Activated CD8-positive, alpha-beta memory T cell treated with anti-CD3 and anti-CD28 coated beads, Interleukin-2, amount 10 ng/mL, durations not matched to agents 7 days and 5 days (primary cell): ENCODE measurements at regions of chr9 and their contacts with region 1.

Region 1: GRCh38 chr9:4117835-4118610 is 181.8 kb downstream of the GLIS3 start:
- DNase-seq: peak; percentile 65
- ATAC-seq: peak; percentile 58
- H3K4me3 Mint-ChIP-seq: no peak overlapping the region
- H3K27ac Mint-ChIP-seq: no peak overlapping the region
- H3K4me1 Mint-ChIP-seq: no peaks in the 10 kb centered on the region
- H3K27me3 Mint-ChIP-seq: peaks cover 6% of the 10 kb centered on the region

Region 2: GRCh38 chr9:3732077-3733038 is 385.7 kb before region 1 on chr9:
- CTCF ChIA-PET with region 1: interaction called, 18 read pairs
- DNase-seq: peak; percentile 57
- ATAC-seq: peak; percentile 97
- H3K4me3 Mint-ChIP-seq: peak overlapping the region; percentile 40
- H3K27ac Mint-ChIP-seq: peak overlapping the region; percentile 6
- H3K4me1 Mint-ChIP-seq: peaks cover 26% of the 10 kb centered on the region
- H3K27me3 Mint-ChIP-seq: no peaks in the 10 kb centered on the region

Region 3: GRCh38 chr9:3968891-3969290 is 149.1 kb before region 1 on chr9:
- CTCF ChIA-PET with region 1: no interaction called
- DNase-seq: no peak
- ATAC-seq: no peak
- H3K4me3 Mint-ChIP-seq: no peak overlapping the region
- H3K27ac Mint-ChIP-seq: no peak overlapping the region
- H3K4me1 Mint-ChIP-seq: no peaks in the 10 kb centered on the region
- H3K27me3 Mint-ChIP-seq: peaks cover 8% of the 10 kb centered on the region

Region 4: DNA sequence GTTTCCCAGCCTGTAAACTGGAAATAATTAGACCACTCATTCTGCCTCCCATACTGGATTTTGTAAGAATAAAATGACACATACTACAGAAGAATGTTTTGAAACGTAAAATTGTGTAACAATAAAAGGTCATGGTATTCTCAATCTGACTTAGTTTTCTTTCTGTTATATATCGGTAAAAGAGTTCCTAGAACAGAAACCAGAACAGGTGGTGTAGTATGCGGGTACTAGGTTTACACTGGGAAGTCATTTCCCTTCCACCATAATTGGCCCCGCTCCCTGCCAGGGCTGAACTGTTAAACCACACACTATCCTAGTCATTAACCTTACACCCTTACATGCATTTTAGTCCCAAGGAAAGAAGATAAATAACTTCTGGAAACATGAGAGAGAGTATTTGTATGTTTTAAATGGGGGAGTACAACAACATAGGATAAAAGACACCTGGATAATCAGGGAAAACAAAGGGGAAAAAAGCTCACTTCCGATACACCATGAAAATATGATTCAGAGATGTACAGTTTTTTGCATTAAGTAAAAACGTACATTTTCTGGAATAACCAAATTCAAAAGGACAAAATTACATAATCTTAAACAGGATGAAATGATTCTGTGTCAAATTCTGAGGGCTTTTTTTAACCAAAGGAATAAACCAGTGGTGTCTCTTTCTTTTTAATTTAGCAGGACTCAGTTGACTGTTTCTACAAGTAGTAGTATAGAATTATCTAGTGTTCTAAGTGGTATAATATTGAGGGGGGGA is 17.9 kb before region 1 on chr9:
- CTCF ChIA-PET with region 1: no interaction called
- DNase-seq: no peak
- ATAC-seq: no peak
- H3K4me3 Mint-ChIP-seq: no peak overlapping the region
- H3K27ac Mint-ChIP-seq: no peak overlapping the region
- H3K4me1 Mint-ChIP-seq: peaks cover 8% of the 10 kb centered on the region
- H3K27me3 Mint-ChIP-seq: peaks cover 33% of the 10 kb centered on the region

Region 5: GRCh38 chr9:4152876-4153275 is 34.9 kb after region 1 on chr9:
- CTCF ChIA-PET with region 1: no interaction called
- DNase-seq: no peak
- ATAC-seq: no peak
- H3K4me3 Mint-ChIP-seq: no peak overlapping the region
- H3K27ac Mint-ChIP-seq: no peak overlapping the region
- H3K4me1 Mint-ChIP-seq: no peaks in the 10 kb centered on the region
- H3K27me3 Mint-ChIP-seq: peaks cover 17% of the 10 kb centered on the region

Region 6: DNA sequence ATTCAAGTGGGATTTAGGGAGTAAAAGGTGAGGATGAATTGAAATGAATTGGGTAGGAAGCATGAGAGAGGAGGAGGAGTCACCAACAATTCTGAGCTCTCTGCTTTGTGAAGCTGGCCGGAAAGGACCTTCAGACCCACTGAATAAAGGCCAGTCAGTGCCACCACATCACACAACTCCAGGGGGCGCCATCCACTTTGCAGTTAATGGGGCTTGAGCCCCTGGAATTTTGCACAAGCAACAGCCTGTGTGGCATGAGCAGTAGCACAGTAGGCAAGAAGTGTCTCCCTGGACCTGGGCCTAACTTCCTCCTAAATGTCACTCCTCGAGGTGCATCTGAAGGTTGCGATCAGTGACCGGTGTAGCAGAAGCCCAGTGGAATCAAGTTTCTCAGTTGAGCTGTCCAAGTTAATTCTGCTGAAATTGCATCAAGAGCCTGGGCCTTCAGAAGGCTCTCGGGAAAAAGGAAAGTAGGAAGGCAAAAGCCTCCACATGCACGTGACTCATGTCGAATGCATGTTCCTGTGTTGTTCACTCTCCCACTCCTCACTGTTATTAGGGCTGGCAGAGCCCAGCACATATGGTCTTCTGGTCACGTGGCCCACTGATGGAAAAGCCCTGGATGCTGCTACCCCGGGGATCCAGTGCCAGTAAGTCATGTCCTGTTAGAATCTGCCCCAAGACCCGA is 209.6 kb after region 1 on chr9:
- CTCF ChIA-PET with region 1: no interaction called
- DNase-seq: no peak
- ATAC-seq: no peak
- H3K4me3 Mint-ChIP-seq: no peak overlapping the region
- H3K27ac Mint-ChIP-seq: no peak overlapping the region
- H3K4me1 Mint-ChIP-seq: no peaks in the 10 kb centered on the region
- H3K27me3 Mint-ChIP-seq: peaks cover 11% of the 10 kb centered on the region